Activated CD4-positive, alpha-beta T cell treated with anti-CD3 and anti-CD28 coated beads for 36 hours (primary cell): ENCODE measurements at regions of chr19 and their contacts with region 1.

Region 1: DNA sequence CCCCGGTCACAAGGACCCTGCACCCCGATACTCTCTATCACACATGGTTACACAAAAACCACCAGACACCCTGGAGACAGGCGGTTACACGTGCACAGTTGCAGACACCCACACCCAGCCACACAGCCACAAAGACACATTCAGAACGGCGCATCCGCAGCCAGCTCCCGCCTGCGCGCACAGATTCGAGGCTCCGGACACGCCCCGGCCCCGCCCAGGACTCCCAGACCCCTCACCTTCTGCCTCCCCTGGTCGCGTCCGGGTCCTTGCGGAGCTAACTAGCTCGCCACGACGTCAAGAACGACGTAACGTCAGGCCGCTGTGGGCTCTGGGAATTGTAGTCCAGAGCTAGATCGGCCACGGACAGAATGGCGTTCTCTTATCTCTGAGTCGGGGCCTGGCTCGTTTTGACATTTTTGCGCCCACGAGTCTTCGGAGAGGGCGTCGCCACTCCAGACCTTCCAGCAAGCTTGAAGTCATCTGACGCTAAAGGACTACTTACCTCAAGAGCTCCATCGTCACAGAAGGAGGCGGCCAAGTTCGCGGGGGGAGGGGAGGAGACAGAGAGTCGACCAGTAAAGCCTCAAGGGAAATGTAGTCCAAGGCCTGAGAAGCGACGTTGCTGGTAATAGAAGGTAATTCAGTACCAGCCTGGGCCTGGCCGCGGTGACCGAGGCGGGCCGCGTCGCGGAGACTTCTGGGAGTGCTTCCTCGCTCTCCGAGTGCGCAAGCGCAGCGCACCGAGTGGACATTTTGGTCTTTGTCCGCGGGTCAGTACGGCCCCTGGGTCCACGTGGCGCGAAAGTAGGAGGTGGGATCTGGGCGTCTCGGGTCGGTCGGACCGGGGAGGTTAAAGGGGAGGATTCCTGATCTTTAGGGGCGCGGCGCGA is at the starts of genes ZNF146 and ZNF565:
- DNase-seq: peak; percentile 99
- ATAC-seq: peak; percentile 88
- H3K4me3 Mint-ChIP-seq: no peak within 1 kb of the TSS
- H3K27ac Mint-ChIP-seq: no peak within 1 kb of the TSS
- H3K4me1 Mint-ChIP-seq: peaks cover 25% of the 10 kb centered on the region
- H3K27me3 Mint-ChIP-seq: no peaks in the 10 kb centered on the region
- total RNA-seq, gene ZNF146: 105 to 111 TPM
- total RNA-seq, gene ZNF565: 2.8 to 2.9 TPM

Region 2: DNA sequence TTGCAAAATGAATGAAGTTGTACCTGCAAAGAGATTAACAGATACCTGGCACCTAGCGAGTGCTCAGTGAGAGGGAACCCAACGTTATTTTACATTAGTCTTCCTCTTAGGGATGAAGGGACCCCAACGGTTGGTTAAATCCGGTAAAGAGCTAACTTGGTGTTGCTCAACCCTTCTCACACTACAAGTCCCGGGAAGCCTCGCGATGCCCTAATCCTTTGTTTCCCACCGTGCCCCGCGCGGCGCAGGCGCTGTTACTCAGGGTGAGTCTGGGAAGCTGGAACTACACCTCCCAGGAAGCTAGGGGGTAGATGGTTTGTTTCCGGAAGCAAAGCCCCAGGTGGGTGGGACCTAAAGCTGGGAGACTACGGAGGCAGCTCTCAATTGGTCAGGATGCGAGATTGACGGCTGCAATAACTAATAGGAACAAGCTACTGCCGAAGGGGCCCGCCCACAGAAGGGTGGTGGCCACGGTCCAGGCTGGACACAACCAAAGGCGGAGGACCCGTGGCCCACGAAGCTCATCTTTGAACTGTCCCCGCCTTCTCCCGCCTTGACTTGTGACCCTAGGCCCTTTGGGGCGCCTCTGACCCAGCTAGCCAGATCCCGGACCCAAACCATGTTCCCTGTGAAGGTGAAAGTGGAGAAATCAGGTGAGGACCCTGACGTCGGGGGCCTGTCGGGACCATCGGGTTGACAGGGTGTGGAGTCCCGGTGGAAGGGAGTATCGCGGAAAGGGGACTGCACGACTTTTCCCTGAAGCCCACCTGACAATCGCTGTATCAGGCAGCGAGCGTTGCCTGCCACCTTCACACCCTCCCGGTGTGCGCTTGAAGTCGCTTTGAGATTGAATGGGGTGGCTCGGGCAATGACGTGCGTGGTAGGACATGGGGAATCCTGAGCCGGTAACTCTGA is 466.3 kb before region 1 on chr19 and contains the start of gene LIN37:
- CTCF ChIA-PET with region 1: no interaction called
- POLR2A ChIA-PET with region 1: no interaction called
- intact Hi-C with region 1: loop called in 1 of 2 experiments (anchors 1 kb)
- DNase-seq: peak; percentile 99
- ATAC-seq: peak; percentile 81
- H3K4me3 Mint-ChIP-seq: peak within 1 kb of the TSS; percentile 89
- H3K27ac Mint-ChIP-seq: peak within 1 kb of the TSS; percentile 94
- H3K4me1 Mint-ChIP-seq: peaks cover 40% of the 10 kb centered on the region
- H3K27me3 Mint-ChIP-seq: no peaks in the 10 kb centered on the region
- total RNA-seq, gene LIN37: 8.4 to 12.7 TPM

Region 3: DNA sequence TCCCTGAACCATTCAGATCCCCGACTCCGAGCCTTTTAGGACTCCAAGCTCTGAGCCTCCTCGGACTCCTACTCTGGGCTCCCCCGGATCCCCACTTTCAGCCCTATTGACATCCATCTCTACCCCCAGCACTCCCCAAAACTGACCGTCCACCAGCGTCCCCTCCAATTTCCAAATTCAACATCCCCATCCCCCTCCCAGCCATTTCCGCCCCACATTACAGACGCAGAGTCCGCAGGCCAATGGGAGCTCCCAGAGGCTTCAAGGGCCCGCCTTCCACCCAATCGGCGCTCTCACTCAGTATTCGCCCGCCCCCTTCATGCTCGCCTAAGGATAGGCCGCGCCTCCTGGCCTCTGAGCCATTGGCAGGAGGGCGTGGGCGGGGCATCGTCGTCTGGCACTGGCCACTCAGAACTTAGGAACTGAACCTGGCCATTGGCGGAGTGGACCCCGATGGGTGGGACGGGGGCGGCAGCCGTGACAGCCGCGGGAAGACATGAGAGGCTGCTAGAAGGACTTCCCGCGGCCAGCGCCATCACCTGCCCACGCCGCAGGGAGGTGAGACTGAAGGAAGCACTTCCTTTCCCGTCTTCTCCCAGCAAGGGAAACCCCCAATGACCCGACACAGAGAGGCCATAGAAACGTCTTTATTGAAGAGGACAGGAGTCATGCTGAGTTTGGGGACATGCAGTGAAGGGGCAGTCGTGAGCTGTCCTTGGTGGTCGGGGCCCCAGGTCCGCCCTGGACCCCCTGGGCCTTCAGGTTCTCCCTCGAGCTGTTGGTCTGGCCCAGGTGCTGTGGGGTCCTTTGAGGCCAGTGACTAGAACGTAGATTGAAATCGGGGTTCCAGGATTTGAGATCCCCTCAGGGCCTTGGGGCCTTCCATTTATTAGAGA is 200.4 kb before region 1 on chr19 and contains the start of gene ALKBH6:
- CTCF ChIA-PET with region 1: no interaction called
- POLR2A ChIA-PET with region 1: no interaction called
- intact Hi-C with region 1: loop called in 1 of 2 experiments (anchors 1 kb)
- DNase-seq: peak; percentile 100
- ATAC-seq: peak; percentile 98
- H3K4me3 Mint-ChIP-seq: peak within 1 kb of the TSS; percentile 96
- H3K27ac Mint-ChIP-seq: peak within 1 kb of the TSS; percentile 94
- H3K4me1 Mint-ChIP-seq: peaks cover 32% of the 10 kb centered on the region
- H3K27me3 Mint-ChIP-seq: no peaks in the 10 kb centered on the region
- total RNA-seq, gene ALKBH6: 40.6 to 42.2 TPM

Region 4: DNA sequence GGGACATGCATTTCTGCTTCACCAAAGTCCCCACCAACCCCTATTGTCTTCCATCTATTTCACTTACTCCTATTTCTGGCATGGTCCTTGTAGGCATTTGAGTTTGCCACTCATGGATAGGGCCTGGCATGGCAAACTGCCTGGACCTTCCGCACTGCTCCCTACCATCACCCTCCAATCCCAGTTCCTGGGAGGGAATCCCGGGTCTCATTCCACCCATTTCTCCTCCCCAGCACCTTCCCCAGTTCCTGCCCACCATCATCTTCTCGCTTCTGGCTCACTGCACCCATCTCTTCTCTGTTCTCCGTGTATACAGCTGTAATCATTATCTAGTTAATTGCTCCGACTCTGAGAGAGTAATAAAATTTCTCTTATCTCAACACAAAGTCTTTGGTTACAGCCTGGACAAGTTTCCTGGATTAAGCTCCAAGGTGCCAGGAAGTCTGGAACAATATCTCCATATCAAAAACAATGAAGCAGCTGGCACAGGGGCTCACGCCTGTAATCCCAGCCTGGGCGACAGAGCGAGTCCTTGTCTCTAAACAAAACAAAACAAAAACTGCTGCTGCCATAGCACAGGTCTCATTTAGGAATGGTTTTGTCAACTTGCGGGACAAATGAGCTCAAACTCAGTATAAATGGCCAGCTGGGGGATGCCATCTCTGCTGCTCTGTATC is 45.4 kb before region 1 on chr19:
- CTCF ChIA-PET with region 1: no interaction called
- POLR2A ChIA-PET with region 1: no interaction called
- intact Hi-C with region 1: no loop called
- DNase-seq: no peak
- ATAC-seq: no peak
- H3K4me3 Mint-ChIP-seq: no peak overlapping the region
- H3K27ac Mint-ChIP-seq: no peak overlapping the region
- H3K4me1 Mint-ChIP-seq: peaks cover 4% of the 10 kb centered on the region
- H3K27me3 Mint-ChIP-seq: no peaks in the 10 kb centered on the region

Region 5: GRCh38 chr19:36331353-36332228 is 117.0 kb after region 1 on chr19:
- CTCF ChIA-PET with region 1: no interaction called
- POLR2A ChIA-PET with region 1: no interaction called
- intact Hi-C with region 1: loop called in 1 of 2 experiments (anchors 1 kb)
- DNase-seq: peak; percentile 82
- ATAC-seq: peak; percentile 97
- H3K4me3 Mint-ChIP-seq: peak overlapping the region; percentile 67
- H3K27ac Mint-ChIP-seq: peak overlapping the region; percentile 47
- H3K4me1 Mint-ChIP-seq: peaks cover 13% of the 10 kb centered on the region
- H3K27me3 Mint-ChIP-seq: no peaks in the 10 kb centered on the region

Region 6: DNA sequence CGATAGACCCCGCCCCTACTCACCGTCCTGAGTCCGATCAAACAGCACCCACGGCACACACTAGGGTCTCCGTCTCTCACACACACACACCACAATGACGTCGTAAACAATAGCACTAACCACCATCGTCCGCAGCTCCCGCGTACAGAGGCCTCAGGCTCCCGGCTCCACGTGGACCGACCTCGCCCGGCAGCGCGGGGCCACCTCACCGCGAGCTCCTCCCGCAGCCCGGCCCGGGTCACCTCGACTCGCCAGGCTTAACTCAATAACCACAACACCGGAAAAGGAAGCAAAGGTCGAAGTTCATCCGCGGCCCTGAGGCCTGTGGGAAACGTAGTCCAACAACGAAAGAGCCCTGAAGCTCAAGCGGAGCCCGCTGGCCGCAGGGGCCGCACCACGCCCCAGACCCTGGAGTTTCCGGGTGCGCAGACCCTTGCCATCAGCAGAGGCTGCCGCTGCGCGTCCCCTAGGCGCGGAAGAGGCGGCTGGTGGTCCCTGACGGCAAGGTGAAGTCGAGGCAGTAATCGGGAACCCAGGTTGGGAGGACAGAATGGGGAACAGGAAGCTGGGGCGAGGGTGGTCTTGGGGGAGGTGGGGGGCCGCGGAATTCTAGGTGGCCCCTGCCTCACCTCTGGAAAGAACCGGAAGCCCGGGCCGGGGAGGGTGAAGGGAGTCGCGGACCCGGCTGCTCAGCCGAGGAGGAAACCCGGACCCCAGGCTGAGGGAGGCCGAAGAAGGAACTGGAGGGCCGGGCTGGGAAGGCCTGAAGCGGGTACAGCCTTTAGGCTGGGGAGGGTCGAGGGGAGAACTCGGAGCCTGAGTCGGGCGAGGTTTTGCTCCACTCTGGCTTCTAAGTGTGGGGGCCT is 358.6 kb after region 1 on chr19 and contains the start of gene ZNF529:
- CTCF ChIA-PET with region 1: no interaction called
- POLR2A ChIA-PET with region 1: no interaction called
- intact Hi-C with region 1: loop called in 1 of 2 experiments (anchors 1 kb)
- DNase-seq: peak; percentile 91
- ATAC-seq: peak; percentile 90
- H3K4me3 Mint-ChIP-seq: peak within 1 kb of the TSS; percentile 83
- H3K27ac Mint-ChIP-seq: peak within 1 kb of the TSS; percentile 93
- H3K4me1 Mint-ChIP-seq: peaks cover 27% of the 10 kb centered on the region
- H3K27me3 Mint-ChIP-seq: no peaks in the 10 kb centered on the region
- total RNA-seq, gene ZNF529: 12.5 to 19.2 TPM

Region 7: GRCh38 chr19:36796076-36796992 is 581.7 kb after region 1 on chr19:
- CTCF ChIA-PET with region 1: no interaction called
- POLR2A ChIA-PET with region 1: no interaction called
- intact Hi-C with region 1: loop called in 1 of 2 experiments (anchors 1 kb)
- DNase-seq: no peak
- ATAC-seq: no peak
- H3K4me3 Mint-ChIP-seq: peak overlapping the region; percentile 83
- H3K27ac Mint-ChIP-seq: peak overlapping the region; percentile 92
- H3K4me1 Mint-ChIP-seq: peaks cover 14% of the 10 kb centered on the region
- H3K27me3 Mint-ChIP-seq: peaks cover 4% of the 10 kb centered on the region

Region 8: DNA sequence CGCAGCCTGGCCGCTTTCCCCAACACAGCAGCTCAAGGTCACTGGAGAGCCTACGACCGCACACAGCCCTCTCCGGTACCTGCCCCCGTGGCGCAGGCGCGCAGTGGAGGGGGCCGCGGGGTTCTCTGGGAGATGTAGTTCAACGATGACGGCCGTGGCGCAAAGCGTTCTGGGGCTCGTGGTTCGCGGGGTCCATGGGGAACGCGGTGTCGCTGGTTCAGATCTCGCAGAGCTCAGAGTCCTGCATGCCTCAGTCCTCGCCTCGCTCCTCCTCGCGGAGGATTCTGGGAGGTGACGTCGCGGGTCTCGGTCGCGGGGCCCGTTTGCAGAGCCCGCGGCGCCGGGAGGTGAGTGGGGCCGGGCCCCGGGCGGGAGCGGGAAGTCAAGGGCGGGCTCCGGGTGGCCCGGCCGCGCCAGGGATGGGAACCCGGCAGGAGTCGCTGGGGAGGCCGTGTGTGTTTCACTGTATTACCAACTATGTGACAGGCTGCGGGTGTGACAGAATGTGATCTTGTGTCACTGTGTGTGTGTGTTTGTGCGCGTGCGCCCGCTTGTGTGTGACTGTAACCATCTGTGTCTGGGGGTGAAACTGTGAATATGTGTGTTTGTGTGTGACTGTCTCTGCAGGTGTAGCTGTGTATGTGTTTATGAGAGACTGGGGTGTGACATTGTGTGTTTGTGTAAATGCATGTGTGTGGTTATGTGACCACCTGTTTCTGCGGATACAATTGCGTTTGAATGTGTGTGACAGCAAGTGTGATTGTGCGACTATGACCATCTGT is 1156.4 kb after region 1 on chr19 and contains the start of gene ZNF527:
- CTCF ChIA-PET with region 1: no interaction called
- POLR2A ChIA-PET with region 1: interaction called, 3 read pairs
- intact Hi-C with region 1: loop called in 1 of 2 experiments (anchors 1 kb)
- DNase-seq: peak; percentile 98
- ATAC-seq: peak; percentile 99
- H3K4me3 Mint-ChIP-seq: peak within 1 kb of the TSS; percentile 85
- H3K27ac Mint-ChIP-seq: peak within 1 kb of the TSS; percentile 95
- H3K4me1 Mint-ChIP-seq: peaks cover 10% of the 10 kb centered on the region
- H3K27me3 Mint-ChIP-seq: no peaks in the 10 kb centered on the region
- total RNA-seq, gene ZNF527: 5.0 to 5.4 TPM